OCI-LY7 (cell line): ENCODE measurements at regions of chr1 and their contacts with region 1.

Region 1: GRCh38 chr1:87064986-87065385 is 150.6 kb downstream of the HS2ST1 start:
- DNase-seq: no peak
- H3K4me3 ChIP-seq: no peak overlapping the region
- H3K27ac ChIP-seq: peak overlapping the region; percentile 49
- H3K4me1 ChIP-seq: peaks cover 69% of the 10 kb centered on the region
- CTCF ChIP-seq: no peak

Region 2: GRCh38 chr1:87051965-87052364 is 13.0 kb before region 1 on chr1:
- CTCF ChIA-PET with region 1: no interaction called
- POLR2A ChIA-PET with region 1: interaction called, 29 read pairs
- intact Hi-C with region 1: no loop called
- DNase-seq: peak; percentile 83
- H3K4me3 ChIP-seq: peak overlapping the region; percentile 57
- H3K27ac ChIP-seq: peak overlapping the region; percentile 98
- H3K4me1 ChIP-seq: peaks cover 81% of the 10 kb centered on the region
- CTCF ChIP-seq: no peak

Region 3: DNA sequence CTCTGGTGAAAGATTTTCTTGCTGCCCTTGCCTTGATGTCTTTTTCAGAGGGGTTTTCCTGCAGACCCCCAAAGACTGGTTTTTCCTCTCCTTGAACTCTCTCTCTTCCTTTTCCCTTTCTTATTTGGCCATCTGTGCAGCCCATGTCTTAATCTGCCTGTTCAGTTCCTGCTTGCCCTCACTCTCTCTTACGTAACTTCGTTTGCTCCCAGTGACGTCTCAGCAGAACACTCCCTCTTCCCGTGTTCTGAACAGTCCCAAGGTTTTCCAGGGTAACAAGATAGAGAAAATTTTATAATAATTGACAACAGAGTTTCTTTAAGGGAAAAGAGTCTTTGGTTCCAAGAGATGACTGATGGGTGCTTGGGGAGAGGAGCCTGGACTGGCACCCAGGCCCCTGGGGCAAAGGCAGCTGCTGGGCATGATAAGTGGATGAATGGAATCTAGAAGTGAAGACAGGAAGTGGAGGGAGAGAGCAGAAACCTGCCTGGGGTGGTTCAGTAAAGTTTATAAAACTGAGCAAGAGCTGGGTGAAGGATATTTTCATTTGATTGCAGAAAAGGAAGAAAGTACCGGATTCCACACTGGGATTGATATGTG is 154.7 kb after region 1 on chr1:
- CTCF ChIA-PET with region 1: no interaction called
- POLR2A ChIA-PET with region 1: no interaction called
- intact Hi-C with region 1: no loop called
- DNase-seq: no peak
- H3K4me3 ChIP-seq: no peak overlapping the region
- H3K27ac ChIP-seq: no peak overlapping the region
- H3K4me1 ChIP-seq: no peaks in the 10 kb centered on the region
- CTCF ChIP-seq: no peak